ENCODE measurements at regions of chr7 and their contacts with region 1.

Region 1: GRCh38 chr7:108890862-108891261 is 321.2 kb downstream of the DNAJB9 start:
- DNase-seq: no peak
- H3K4me3 ChIP-seq: no peak overlapping the region
- H3K27ac ChIP-seq: no peak overlapping the region
- H3K4me1 ChIP-seq: no peaks in the 10 kb centered on the region
- H3K27me3 ChIP-seq: no peaks in the 10 kb centered on the region
- CTCF ChIP-seq: no peak
- POLR2A ChIP-seq: no peak

Region 2: DNA sequence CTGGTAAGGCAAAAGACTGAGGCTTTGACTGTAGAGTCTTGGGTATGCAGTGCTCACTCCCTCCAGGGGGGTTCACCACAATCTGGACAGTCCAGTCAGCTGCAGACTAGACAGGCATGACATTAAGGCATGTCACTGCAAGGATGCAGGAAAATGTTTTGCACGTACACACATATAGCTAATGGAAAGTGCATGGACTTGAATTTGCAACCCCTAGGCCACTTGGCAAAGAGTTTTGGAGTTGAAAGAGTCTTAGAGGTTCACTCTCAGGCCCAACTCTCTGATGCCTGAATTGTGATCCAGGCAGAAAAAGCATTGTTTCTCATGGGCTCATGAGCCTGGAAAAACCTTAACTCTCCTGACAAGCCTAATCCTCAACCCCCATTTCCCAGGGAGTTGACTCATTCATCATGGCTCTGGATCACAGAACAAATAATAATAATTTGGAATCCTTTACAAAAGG is 812.6 kb before region 1 on chr7:
- intact Hi-C with region 1: no loop called
- DNase-seq: no peak
- H3K4me3 ChIP-seq: no peak overlapping the region
- H3K27ac ChIP-seq: no peak overlapping the region
- H3K4me1 ChIP-seq: no peaks in the 10 kb centered on the region
- H3K27me3 ChIP-seq: no peaks in the 10 kb centered on the region
- CTCF ChIP-seq: no peak
- POLR2A ChIP-seq: no peak

Region 3: GRCh38 chr7:108863227-108863848 is 27.5 kb before region 1 on chr7:
- intact Hi-C with region 1: no loop called
- DNase-seq: no peak
- H3K4me3 ChIP-seq: no peak overlapping the region
- H3K27ac ChIP-seq: no peak overlapping the region
- H3K4me1 ChIP-seq: no peaks in the 10 kb centered on the region
- H3K27me3 ChIP-seq: no peaks in the 10 kb centered on the region
- CTCF ChIP-seq: no peak
- POLR2A ChIP-seq: no peak

Region 4: GRCh38 chr7:109336531-109336930 is 445.7 kb after region 1 on chr7:
- intact Hi-C with region 1: loop called (anchors 5 kb)
- DNase-seq: no peak
- H3K4me3 ChIP-seq: no peak overlapping the region
- H3K27ac ChIP-seq: no peak overlapping the region
- H3K4me1 ChIP-seq: no peaks in the 10 kb centered on the region
- H3K27me3 ChIP-seq: no peaks in the 10 kb centered on the region
- CTCF ChIP-seq: no peak
- POLR2A ChIP-seq: no peak

Region 5: GRCh38 chr7:110786328-110786965 is 1895.6 kb after region 1 on chr7:
- intact Hi-C with region 1: loop called (anchors 5 kb)
- DNase-seq: no peak
- H3K4me3 ChIP-seq: no peak overlapping the region
- H3K27ac ChIP-seq: no peak overlapping the region
- H3K4me1 ChIP-seq: no peaks in the 10 kb centered on the region
- H3K27me3 ChIP-seq: no peaks in the 10 kb centered on the region
- CTCF ChIP-seq: no peak
- POLR2A ChIP-seq: no peak